Activated CD8-positive, alpha-beta T cell treated with anti-CD3 and anti-CD28 coated beads for 36 hours (primary cell): ENCODE measurements at regions of chr4 and their contacts with region 1.

Region 1: GRCh38 chr4:113952452-113953029 is 26.9 kb downstream of the ARSJ start:
- DNase-seq: peak; percentile 50
- ATAC-seq: peak; percentile 97
- H3K4me3 Mint-ChIP-seq: no peak overlapping the region
- H3K27ac Mint-ChIP-seq: no peak overlapping the region
- H3K4me1 Mint-ChIP-seq: peaks cover 6% of the 10 kb centered on the region
- H3K27me3 Mint-ChIP-seq: peaks cover 11% of the 10 kb centered on the region
- CTCF ChIP-seq: peak; percentile 82

Region 2: DNA sequence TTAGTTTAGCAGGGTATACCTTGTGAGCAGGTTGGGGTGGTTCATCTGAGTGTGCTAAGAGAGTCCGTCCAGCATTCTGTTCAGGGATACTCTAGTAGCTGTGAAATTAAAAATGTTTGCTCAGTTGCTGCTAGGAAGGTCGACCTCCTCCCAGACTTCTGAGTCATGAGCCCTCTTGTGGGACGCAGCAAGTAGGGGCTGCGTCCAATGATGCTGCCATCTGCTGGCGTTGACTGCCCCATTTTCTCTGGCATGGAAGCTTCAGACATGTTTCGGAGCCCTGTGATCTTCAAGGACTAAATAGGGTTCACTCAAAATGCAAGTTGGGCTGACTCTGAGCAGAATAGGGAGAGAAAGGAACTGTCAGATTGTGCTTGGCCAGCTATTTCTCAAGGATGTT is 227.9 kb after region 1 on chr4:
- CTCF ChIA-PET with region 1: no interaction called
- POLR2A ChIA-PET with region 1: no interaction called
- intact Hi-C with region 1: loop called (anchors 5 kb)
- DNase-seq: peak; percentile 56
- ATAC-seq: peak; percentile 58
- H3K4me3 Mint-ChIP-seq: no peak overlapping the region
- H3K27ac Mint-ChIP-seq: no peak overlapping the region
- H3K4me1 Mint-ChIP-seq: no peaks in the 10 kb centered on the region
- H3K27me3 Mint-ChIP-seq: no peaks in the 10 kb centered on the region
- CTCF ChIP-seq: peak; percentile 31

Region 3: DNA sequence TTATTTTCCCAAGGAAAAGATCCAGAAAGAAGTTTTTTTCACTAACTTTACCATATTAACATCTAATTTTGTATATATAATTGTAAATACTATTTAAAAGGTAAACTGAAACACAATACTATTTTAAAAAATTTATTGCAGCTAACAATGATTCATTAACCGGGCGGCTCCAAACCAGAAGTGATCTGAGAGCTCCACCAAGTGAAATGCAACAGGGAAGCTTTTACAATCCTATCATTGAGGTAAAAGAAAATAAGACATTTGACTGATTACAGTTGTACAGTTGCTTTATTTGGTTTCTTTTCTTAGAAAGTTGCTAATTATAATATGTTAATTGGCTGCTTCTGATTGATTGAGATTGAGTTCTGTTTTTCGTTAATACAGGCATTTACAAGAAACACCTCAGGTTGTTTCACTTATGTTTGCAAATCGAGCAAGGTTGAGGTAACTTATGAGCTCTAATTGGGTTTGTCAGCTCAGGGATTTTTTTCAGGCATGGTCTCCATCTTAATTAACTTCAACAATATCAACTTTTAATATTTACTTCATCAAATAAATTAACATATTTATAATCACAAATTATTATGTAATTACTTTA is 425.9 kb after region 1 on chr4:
- CTCF ChIA-PET with region 1: no interaction called
- POLR2A ChIA-PET with region 1: no interaction called
- intact Hi-C with region 1: loop called (anchors 10 kb)
- DNase-seq: no peak
- ATAC-seq: no peak
- H3K4me3 Mint-ChIP-seq: no peak overlapping the region
- H3K27ac Mint-ChIP-seq: no peak overlapping the region
- H3K4me1 Mint-ChIP-seq: no peaks in the 10 kb centered on the region
- H3K27me3 Mint-ChIP-seq: peaks cover 9% of the 10 kb centered on the region
- CTCF ChIP-seq: no peak